HEK293 (cell line): ENCODE measurements at regions of chr9 and their contacts with region 1.

Region 1: DNA sequence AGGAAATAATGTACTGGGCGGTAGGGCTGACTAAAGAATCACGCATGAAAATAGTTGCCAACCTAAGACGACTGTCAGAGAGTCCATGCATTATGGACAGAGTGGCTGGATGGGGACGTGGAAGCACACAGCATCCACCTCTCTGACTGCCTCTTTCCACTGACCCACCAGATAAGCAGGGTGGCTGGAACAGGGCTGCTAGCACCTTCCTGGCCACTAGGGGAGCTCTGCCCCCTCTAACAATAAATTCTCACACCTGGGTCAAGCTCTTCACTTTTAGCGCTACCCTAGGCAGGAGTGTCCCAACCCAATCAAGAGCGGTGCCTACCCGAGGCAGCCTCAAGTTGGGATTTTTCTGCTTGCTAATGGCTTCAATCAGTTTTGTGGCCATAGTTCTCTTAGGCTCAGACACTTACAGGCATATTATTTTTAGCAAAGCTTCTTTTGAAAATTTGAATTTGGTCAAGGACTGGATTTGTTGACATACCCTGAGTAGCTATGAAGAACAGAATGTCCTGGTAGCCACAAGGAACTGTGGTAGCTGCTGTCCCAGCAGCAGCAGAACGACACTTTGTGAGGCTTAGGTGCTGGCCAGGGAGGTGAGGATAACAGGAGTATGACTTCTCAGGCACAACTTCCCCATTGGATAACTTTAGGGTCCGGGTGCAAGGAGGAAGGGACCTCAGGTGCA is 6.9 kb upstream of the TPM2 start:
- H3K4me3 ChIP-seq: no peak overlapping the region
- H3K27ac ChIP-seq: no peak overlapping the region
- H3K4me1 ChIP-seq: no peaks in the 10 kb centered on the region
- CTCF ChIP-seq: no peak; the same call in 1 of the 2 replicates

Region 2: DNA sequence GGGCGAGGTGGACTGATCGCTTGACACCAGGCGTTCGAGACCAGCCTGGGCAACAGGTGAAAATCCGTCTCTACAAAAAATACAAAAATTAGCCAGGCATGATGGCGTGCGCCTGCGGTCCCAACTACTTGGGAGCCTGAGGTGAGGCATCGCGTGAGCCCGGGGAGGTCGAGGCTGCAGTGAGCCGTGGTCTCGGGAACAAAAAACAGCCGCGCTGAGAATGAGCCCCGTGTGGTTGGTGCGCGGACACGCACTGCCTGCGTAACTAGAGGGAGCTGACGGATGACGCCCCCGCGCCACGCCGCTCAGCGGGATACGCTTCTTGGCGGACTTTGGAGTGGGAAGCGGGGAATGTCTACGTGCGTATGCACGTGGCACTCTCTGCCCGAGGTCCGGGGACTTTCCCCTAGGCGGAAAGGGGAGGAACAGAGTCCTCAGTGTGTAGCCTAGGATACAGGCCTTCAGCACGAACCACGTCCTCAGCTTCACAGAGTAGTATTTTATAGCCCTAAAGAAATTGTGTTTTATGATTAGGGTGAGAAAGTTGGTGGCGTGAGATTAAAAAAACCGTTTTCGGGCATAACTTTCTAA is 39.0 kb before region 1 on chr9 and contains the start of gene RMRP:
- CTCF ChIA-PET with region 1: interaction called, 157 read pairs
- POLR2A ChIA-PET with region 1: interaction called, 31 read pairs
- H3K4me3 ChIP-seq: peak within 1 kb of the TSS; percentile 70
- H3K27ac ChIP-seq: peak within 1 kb of the TSS; percentile 93
- H3K4me1 ChIP-seq: peaks cover 8% of the 10 kb centered on the region; the same call in 1 of the 2 replicates
- CTCF ChIP-seq: peak; percentile 89

Region 3: DNA sequence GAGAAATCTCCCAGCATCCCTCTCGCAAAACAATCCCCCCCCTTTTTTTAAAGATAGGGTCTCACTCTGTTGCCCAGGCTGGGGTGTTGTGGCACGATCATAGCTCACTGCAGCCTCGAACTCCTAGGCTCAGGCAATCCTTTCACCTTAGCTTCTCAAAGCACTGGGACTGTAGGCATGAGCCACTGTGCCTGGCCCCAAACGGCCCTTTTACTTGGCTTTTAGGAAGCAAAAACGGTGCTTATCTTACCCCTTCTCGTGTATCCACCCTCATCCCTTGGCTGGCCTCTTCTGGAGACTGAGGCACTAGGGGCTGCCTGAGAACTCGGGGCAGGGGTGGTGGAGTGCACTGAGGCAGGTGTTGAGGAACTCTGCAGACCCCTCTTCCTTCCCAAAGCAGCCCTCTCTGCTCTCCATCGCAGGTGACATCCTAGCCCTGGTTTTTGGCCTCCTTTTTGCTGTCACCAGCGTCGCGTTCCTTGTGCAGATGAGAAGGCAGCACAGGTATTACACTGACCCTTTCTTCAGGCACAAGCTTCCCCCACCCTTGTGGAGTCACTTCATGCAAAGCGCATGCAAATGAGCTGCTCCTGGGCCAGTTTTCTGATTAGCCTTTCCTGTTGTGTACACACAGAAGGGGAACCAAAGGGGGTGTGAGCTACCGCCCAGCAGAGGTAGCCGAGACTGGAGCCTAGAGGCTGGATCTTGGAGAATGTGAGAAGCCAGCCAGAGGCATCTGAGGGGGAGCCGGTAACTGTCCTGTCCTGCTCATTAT is 16.2 kb before region 1 on chr9:
- CTCF ChIA-PET with region 1: interaction called, 14 read pairs
- POLR2A ChIA-PET with region 1: interaction called, 3 read pairs
- H3K4me3 ChIP-seq: no peak overlapping the region
- H3K27ac ChIP-seq: no peak overlapping the region
- H3K4me1 ChIP-seq: no peaks in the 10 kb centered on the region
- CTCF ChIP-seq: no peak

Region 4: DNA sequence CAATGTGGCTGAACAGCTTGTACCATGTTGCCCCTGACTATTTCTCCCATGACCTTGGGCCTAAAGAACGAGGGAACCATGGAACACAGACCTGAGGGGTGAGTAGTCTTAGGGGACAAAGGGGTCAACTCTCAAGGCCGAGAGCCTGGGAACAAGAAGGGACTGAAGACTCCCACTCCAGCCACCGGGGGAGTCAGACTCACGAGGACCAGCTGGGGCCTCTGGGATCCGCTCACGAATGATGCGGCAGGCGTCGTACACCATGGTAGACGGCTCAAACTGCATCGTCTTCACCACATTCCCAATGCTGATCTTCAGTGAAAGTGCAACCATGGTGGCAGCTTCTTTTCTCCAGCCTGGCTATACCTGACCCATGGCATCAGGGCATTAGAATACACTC is 28.7 kb after region 1 on chr9:
- CTCF ChIA-PET with region 1: interaction called, 88 read pairs
- POLR2A ChIA-PET with region 1: interaction called, 11 read pairs
- H3K4me3 ChIP-seq: no peak overlapping the region
- H3K27ac ChIP-seq: no peak overlapping the region
- H3K4me1 ChIP-seq: 0 out of 2 replicates have a peak, but pooled peaks cover 5% of the 10 kb centered on the region
- CTCF ChIP-seq: no peak

Region 5: GRCh38 chr9:35743452-35743851 is 46.8 kb after region 1 on chr9:
- CTCF ChIA-PET with region 1: interaction called, 11 read pairs
- POLR2A ChIA-PET with region 1: interaction called, 3 read pairs
- H3K4me3 ChIP-seq: no peak overlapping the region
- H3K27ac ChIP-seq: no peak overlapping the region
- H3K4me1 ChIP-seq: no peaks in the 10 kb centered on the region; the same call in 1 of the 2 replicates
- CTCF ChIP-seq: no peak